IMR-90 (cell line): ENCODE measurements at regions of chr1 and their contacts with region 1.

Region 1: GRCh38 chr1:205061665-205062069 is 18.7 kb downstream of the CNTN2 start:
- DNase-seq: peak; percentile 52
- ATAC-seq: peak; percentile 93
- H3K4me3 ChIP-seq: no peak overlapping the region
- H3K27ac ChIP-seq: no peak overlapping the region
- H3K4me1 ChIP-seq: no peaks in the 10 kb centered on the region
- H3K27me3 ChIP-seq: peaks cover 15% of the 10 kb centered on the region
- CTCF ChIP-seq: peak; percentile 82
- POLR2A ChIP-seq: no peak
- RAD21 ChIP-seq: peak; percentile 72

Region 2: GRCh38 chr1:205048382-205048781 is 13.3 kb before region 1 on chr1:
- CTCF ChIA-PET with region 1: interaction called, 10 read pairs
- POLR2A ChIA-PET with region 1: no interaction called
- dilution Hi-C with region 1: no loop called
- in situ Hi-C with region 1: no loop called
- intact Hi-C with region 1: no loop called
- DNase-seq: no peak
- ATAC-seq: no peak
- H3K4me3 ChIP-seq: no peak overlapping the region
- H3K27ac ChIP-seq: no peak overlapping the region
- H3K4me1 ChIP-seq: no peaks in the 10 kb centered on the region
- H3K27me3 ChIP-seq: peaks cover 76% of the 10 kb centered on the region
- CTCF ChIP-seq: no peak
- POLR2A ChIP-seq: no peak
- RAD21 ChIP-seq: no peak

Region 3: DNA sequence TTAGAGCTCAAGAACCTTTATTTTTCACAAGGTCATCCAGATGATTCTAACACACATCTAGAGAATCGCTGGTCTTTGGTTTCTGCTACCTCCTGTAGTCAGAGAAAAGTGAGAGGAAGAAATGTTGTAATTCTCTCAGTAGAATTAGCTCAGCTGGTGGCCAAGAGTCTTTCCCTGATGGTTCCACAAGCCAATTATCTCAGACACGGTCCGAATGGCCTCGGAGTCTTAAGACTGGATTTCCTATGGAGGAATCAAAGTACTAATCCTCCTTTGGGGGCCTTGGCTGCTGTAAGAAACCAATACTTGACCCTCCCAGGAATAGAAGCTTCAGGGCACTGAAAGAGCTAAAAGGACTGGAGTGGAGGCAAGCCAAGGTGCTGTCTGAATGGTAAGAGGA is 20.8 kb after region 1 on chr1:
- CTCF ChIA-PET with region 1: interaction called, 10 read pairs
- POLR2A ChIA-PET with region 1: no interaction called
- dilution Hi-C with region 1: no loop called
- in situ Hi-C with region 1: no loop called
- intact Hi-C with region 1: no loop called
- DNase-seq: no peak
- ATAC-seq: no peak
- H3K4me3 ChIP-seq: no peak overlapping the region
- H3K27ac ChIP-seq: no peak overlapping the region
- H3K4me1 ChIP-seq: no peaks in the 10 kb centered on the region
- H3K27me3 ChIP-seq: no peaks in the 10 kb centered on the region
- CTCF ChIP-seq: no peak
- POLR2A ChIP-seq: no peak
- RAD21 ChIP-seq: no peak

Region 4: DNA sequence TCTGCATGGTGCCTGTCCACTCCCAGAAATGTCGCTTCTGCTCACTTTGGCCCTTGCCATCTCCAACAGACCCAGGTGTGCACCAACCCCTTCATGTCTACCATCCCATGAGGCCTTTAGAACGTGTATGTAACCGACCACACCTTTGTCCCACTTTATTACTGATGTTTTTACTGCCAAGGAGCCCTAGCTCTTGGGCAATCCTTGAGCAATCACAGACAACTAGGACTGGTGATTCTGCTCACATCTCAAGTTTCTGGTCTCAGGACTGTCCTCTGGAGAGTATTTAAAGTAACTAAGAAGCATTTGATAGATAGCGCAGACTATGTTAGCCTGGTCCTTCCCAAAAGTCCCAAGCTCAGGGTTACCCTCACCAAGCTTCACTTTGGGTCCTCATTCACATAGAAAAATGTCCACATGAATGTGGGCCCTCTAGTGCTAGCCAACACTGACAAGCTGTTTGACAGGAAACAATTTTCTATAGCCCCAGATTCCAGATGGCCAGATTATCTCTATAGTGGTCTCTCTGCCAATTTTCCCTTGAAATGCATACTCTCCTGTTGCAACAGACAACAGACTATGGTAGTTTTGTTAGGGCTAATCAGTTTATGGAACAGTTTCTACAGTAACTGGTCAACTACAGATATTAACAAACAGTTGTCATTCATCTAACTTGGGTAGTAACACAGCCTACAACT is 29.5 kb after region 1 on chr1:
- CTCF ChIA-PET with region 1: interaction called, 10 read pairs
- POLR2A ChIA-PET with region 1: no interaction called
- dilution Hi-C with region 1: no loop called
- in situ Hi-C with region 1: no loop called
- intact Hi-C with region 1: no loop called
- DNase-seq: peak; percentile 38
- ATAC-seq: peak; percentile 43
- H3K4me3 ChIP-seq: no peak overlapping the region
- H3K27ac ChIP-seq: no peak overlapping the region; the same call in 1 of the 2 replicates
- H3K4me1 ChIP-seq: peaks cover 4% of the 10 kb centered on the region; the same call in 1 of the 2 replicates
- H3K27me3 ChIP-seq: no peaks in the 10 kb centered on the region
- CTCF ChIP-seq: no peak
- POLR2A ChIP-seq: no peak
- RAD21 ChIP-seq: no peak